Left ventricle myocardium superior (tissue), 1 donor: ENCODE measurements at regions of chr17 and their contacts with region 1.

Region 1: DNA sequence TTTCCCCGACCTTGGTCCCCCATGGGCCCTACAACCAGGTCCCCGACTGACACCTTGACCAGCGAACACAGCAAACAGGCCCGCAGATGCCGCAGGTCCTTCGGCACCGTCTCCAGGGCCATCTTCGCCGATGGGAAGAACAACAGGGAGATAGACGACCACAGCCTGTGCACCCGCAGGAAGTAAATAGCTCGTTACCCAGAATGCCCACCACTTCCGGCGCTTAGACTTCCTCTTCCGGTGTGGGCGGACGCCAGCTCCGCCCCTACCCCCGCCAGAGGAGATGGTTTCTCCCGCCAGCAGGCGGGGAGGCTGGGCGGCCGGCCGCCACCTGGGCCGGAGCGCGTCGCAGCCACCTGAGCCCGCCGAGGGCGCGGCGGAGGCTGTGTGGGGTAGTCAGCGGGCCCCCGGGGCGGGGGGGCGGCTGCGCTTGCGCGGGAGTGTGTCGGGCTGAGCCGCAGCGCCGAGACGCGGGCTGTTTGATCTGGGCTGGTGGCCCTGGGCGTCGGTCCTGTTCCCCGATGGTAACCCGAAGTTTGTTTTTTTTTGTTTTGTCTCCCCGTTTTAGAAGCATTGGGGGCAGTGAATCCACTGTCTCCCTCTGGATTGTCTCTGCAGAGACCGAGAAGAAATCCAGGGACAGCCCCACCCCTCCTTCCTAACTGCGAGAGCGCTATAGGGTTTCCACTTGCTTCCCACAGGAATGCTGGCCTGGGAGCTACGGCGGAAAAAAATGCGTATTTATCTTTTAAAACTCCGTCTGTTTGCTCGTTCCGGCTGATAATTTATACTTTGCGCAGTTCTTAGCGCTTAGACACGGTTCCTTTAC is at the start of gene SUPT4H1:
- DNase-seq: peak; percentile 90
- ATAC-seq: peak; percentile 97
- total RNA-seq, gene SUPT4H1: 62.2 TPM

Region 2: GRCh38 chr17:57480438-57481196 is 871.6 kb before region 1 on chr17:
- intact Hi-C with region 1: no loop called
- DNase-seq: peak; percentile 51
- ATAC-seq: peak; percentile 63

Region 3: GRCh38 chr17:58172369-58173071 is 179.7 kb before region 1 on chr17:
- intact Hi-C with region 1: no loop called
- DNase-seq: no peak
- ATAC-seq: no peak

Region 4: DNA sequence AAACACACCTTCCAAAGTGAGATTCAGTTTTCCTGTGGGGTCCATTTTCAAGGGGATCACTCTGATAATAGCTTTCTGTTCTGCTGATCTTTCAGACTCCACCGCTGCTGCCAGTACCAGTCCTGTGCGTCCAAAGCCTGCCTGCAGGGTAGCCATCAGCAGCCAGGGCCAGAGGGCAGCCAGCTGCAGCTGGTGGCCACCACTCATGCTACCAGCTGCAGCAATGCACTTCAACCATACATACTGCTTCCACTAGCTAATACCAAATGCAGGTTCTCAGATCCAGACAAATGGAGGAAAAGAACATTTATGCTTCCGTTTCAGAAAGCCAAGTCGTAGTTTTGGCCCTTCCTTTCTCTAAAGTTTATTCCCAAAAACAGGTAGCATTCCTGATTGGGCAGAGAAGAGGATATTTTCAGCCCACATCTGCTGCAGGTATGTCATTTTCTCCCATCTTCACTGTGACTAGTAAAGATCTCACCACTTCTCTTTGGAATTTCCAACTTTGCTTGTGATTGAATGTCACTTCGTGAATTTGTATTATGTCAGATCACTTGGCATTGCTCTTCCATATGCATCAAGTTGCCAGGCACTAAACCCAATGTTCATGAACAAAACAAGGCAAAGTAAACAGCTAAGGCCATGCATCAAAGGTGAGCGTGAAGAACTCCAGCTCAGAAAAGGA is 63.3 kb after region 1 on chr17:
- intact Hi-C with region 1: loop called (anchors 2 kb)
- DNase-seq: peak; percentile 54
- ATAC-seq: peak; percentile 62

Region 5: GRCh38 chr17:58447039-58447975 is 95.1 kb after region 1 on chr17:
- intact Hi-C with region 1: no loop called
- DNase-seq: peak; percentile 71
- ATAC-seq: peak; percentile 87